ENCODE measurements at regions of chr12 and their contacts with region 1.

Region 1: DNA sequence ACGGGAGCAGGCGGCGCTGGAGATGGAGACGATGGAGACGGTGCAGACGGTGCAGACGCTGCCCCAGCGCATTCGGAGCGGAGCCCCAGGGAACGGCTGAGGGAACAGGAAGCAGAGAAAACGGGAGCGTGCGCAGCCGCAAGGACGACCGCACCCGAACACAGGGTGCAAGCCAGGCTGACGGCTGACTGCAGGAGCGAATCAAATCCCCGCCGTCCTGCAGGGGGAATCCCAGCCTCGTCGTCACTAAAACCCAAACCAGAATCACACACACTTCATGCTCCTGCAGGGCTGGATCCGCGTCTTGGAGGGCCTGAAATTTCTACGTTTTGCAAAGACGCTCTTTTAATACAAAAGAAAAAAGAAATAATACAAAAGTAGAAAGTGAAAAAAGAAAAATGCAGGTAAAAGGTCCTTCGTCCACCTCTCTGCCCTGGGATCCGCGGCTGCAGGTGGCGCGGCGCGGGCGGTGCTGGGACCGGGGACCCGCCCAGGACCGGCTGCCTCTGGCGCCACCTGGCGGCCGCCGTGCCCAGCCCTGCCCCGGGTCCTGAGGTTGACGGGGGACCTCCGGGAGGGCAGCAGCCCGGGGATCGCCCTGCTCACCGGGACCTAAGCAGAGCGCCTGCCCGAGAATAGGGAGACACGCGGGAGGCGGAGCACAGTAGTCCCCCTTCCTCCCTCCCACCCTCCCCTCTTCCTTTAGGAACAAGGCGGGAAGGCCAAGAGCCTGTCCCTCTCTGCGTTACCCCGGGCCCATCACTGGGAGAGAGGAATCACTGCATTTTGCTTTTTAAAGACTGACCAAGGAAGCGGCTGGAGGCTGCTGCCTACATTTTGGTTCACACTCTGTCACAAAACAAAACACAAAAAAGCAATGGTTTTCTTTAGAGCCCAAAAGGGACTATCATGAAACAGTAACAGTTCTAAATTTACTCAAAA is 20.1 kb downstream of the STX2 start:
- DNase-seq: peak; percentile 57
- H3K4me3 ChIP-seq: peak overlapping the region; percentile 28
- H3K27ac ChIP-seq: no peak overlapping the region
- H3K4me1 ChIP-seq: peaks cover 4% of the 10 kb centered on the region
- CTCF ChIP-seq: peak; percentile 83

Region 2: DNA sequence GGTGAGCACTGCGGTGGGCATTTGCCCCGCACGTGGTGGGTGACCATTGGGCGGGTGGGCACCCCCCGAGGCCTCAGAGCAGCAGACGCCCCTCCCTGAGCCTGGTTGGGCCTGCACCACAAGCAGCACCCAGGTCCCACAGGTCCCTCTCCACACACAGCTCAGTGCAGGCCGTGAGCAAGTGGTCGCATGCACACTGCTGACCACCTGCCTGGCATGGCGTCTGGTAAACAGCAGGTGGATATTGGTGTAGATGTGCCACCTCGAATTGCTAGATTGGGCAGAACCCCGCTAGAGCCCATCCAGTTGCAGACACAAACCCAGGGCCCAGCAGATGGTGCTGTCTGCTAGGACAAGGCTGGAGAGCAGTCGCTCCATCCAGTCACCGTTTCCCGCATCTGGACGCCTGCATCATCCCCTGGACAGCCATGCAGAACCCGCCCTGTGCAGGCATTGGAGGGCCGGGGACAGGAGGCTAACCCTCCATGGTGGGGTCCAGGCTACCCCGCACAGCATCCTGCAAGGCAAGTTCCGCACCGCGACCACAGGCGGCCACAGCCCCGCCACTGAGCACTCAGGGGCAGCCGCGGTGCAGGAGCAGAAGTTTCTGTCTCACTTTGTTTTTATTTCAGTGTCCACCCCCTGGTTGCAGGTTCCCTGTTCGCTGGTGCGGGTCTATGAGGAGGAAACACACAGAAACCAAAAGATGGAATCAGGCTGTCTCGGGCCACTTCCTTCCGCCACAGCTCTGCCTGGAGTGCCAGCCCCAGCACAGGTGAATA is 57.2 kb before region 1 on chr12:
- CTCF ChIA-PET with region 1: no interaction called
- POLR2A ChIA-PET with region 1: no interaction called
- intact Hi-C with region 1: loop called (anchors 1 kb)
- DNase-seq: peak; percentile 36
- H3K4me3 ChIP-seq: peak overlapping the region; percentile 11
- H3K27ac ChIP-seq: no peak overlapping the region
- H3K4me1 ChIP-seq: no peaks in the 10 kb centered on the region
- CTCF ChIP-seq: peak; percentile 58

Region 3: GRCh38 chr12:130958557-130959140 is 139.7 kb after region 1 on chr12:
- CTCF ChIA-PET with region 1: no interaction called
- POLR2A ChIA-PET with region 1: no interaction called
- intact Hi-C with region 1: no loop called
- DNase-seq: no peak
- H3K4me3 ChIP-seq: no peak overlapping the region
- H3K27ac ChIP-seq: no peak overlapping the region
- H3K4me1 ChIP-seq: peaks cover 23% of the 10 kb centered on the region
- CTCF ChIP-seq: no peak

Measured in OCI-LY7 (cell line).